Aorta (tissue), 5 donors: ENCODE measurements at regions of chr15 and their contacts with region 1.

Region 1: GRCh38 chr15:88454867-88455810 is 12.0 kb downstream of the MRPL46 start:
- DNase-seq: peak in 1 of 2 donors; percentile 59
- ATAC-seq: peak; percentile 47
- H3K4me3 ChIP-seq: no peak overlapping the region
- H3K27ac ChIP-seq: no peak overlapping the region
- H3K4me1 ChIP-seq: no peaks in the 10 kb centered on the region
- H3K27me3 ChIP-seq: no peaks in the 10 kb centered on the region

Region 2: GRCh38 chr15:86915811-86916331 is 1539.3 kb before region 1 on chr15:
- intact Hi-C with region 1: loop called in 1 of 2 experiments (anchors 10 kb)
- DNase-seq: no peak
- ATAC-seq: peak; percentile 54
- H3K4me3 ChIP-seq: no peak overlapping the region
- H3K27ac ChIP-seq: no peak overlapping the region
- H3K4me1 ChIP-seq: no peaks in the 10 kb centered on the region
- H3K27me3 ChIP-seq: peaks cover 0 to 2% of the 10 kb centered on the region in 2 donors

Region 3: DNA sequence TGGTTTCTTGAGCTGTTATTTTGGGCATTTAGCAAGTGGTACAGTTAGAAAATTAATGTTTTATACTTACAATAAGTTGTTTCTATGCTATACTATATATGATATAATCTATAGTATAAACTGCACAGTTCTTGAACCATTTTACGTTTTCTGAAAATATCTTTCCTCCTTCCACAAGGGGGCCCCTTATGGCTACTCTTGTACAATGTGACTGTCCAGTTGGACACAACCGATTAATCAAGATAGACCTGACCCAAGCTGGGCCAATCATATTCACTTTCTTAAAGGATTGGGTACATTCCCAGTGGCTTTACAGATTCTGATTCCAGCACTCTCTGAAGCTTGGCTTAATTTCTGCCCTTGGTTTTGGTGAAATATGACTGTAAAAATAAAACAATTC is 1422.1 kb before region 1 on chr15:
- intact Hi-C with region 1: loop called in 1 of 2 experiments (anchors 5 kb)
- DNase-seq: no peak
- ATAC-seq: no peak
- H3K4me3 ChIP-seq: no peak overlapping the region
- H3K27ac ChIP-seq: no peak overlapping the region
- H3K4me1 ChIP-seq: no peaks in the 10 kb centered on the region
- H3K27me3 ChIP-seq: no peaks in the 10 kb centered on the region

Region 4: GRCh38 chr15:88258093-88258641 is 197.0 kb before region 1 on chr15:
- intact Hi-C with region 1: loop called in 1 of 2 experiments (anchors 10 kb)
- DNase-seq: peak; percentile 81 to 87
- ATAC-seq: peak; percentile 61
- H3K4me3 ChIP-seq: peak overlapping the region; percentile 80 to 85
- H3K27ac ChIP-seq: peak overlapping the region; percentile 11 to 48
- H3K4me1 ChIP-seq: no peaks in the 10 kb centered on the region
- H3K27me3 ChIP-seq: no peaks in the 10 kb centered on the region

Region 5: GRCh38 chr15:88331280-88331679 is 123.9 kb before region 1 on chr15:
- intact Hi-C with region 1: loop called in 1 of 2 experiments (anchors 10 kb)
- DNase-seq: no peak
- ATAC-seq: no peak
- H3K4me3 ChIP-seq: no peak overlapping the region
- H3K27ac ChIP-seq: no peak overlapping the region
- H3K4me1 ChIP-seq: peaks cover 2 to 6% of the 10 kb centered on the region in 2 donors
- H3K27me3 ChIP-seq: no peaks in the 10 kb centered on the region